ENCODE measurements at regions of chr3 and their contacts with region 1.

Region 1: GRCh38 chr3:42020681-42021307 is 58.9 kb upstream of the ULK4 start:
- DNase-seq: peak; percentile 93
- ATAC-seq: peak; percentile 87
- H3K4me3 ChIP-seq: peak overlapping the region; percentile 16; the same call in 1 of the 2 replicates
- H3K27ac ChIP-seq: peak overlapping the region; percentile 64
- H3K4me1 ChIP-seq: peaks cover 46% of the 10 kb centered on the region
- H3K27me3 ChIP-seq: no peaks in the 10 kb centered on the region
- CTCF ChIP-seq: no peak

Region 2: DNA sequence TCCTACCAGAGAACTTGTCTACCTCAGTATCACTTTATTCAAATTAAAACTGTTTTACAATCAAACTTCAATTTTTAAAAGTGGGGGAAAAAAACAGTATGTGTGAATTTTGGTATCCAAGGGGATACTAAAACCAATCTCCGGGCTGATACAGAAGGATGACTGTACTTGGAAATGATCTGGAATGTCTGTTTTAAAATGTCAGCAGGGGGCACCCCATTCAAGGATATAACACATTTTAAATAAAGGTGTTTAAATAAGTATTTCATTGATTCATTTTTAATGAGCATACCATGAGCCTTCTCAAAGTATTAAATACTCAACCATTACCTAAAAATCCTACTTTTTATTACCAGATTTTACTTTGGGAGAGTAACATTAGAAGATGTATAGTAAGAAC is 126.8 kb before region 1 on chr3:
- CTCF ChIA-PET with region 1: no interaction called
- POLR2A ChIA-PET with region 1: no interaction called
- intact Hi-C with region 1: loop called (anchors 2 kb)
- DNase-seq: peak; percentile 71
- ATAC-seq: peak; percentile 69
- H3K4me3 ChIP-seq: no peak overlapping the region
- H3K27ac ChIP-seq: no peak overlapping the region
- H3K4me1 ChIP-seq: no peaks in the 10 kb centered on the region
- H3K27me3 ChIP-seq: no peaks in the 10 kb centered on the region
- CTCF ChIP-seq: peak; percentile 77

Region 3: DNA sequence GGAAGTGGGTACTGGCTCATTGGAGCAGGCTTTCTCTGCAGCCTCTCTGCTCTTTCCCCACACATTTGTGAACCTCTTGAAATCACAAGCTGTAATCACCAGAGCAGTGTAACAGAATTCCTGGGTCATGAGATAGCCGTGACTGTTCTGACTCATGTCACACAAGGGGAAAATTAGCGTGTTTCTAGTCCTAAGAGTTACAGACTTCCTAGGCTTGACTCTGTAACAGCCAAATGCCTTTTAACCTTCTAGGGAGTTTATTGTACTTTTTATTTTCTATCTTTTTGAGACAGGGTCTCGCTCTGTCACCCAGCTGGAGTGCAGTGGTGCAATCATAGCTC is 15.7 kb after region 1 on chr3:
- CTCF ChIA-PET with region 1: no interaction called
- POLR2A ChIA-PET with region 1: no interaction called
- intact Hi-C with region 1: no loop called
- DNase-seq: peak; percentile 80
- ATAC-seq: peak; percentile 91
- H3K4me3 ChIP-seq: no peak overlapping the region
- H3K27ac ChIP-seq: peak overlapping the region; percentile 50
- H3K4me1 ChIP-seq: peaks cover 21% of the 10 kb centered on the region
- H3K27me3 ChIP-seq: no peaks in the 10 kb centered on the region
- CTCF ChIP-seq: no peak

Region 4: GRCh38 chr3:42071904-42072592 is 51.3 kb after region 1 on chr3:
- CTCF ChIA-PET with region 1: no interaction called
- POLR2A ChIA-PET with region 1: no interaction called
- intact Hi-C with region 1: loop called (anchors 1 kb)
- DNase-seq: peak; percentile 97
- ATAC-seq: peak; percentile 94
- H3K4me3 ChIP-seq: peak overlapping the region; percentile 46
- H3K27ac ChIP-seq: peak overlapping the region; percentile 74
- H3K4me1 ChIP-seq: peaks cover 29% of the 10 kb centered on the region
- H3K27me3 ChIP-seq: no peaks in the 10 kb centered on the region
- CTCF ChIP-seq: 0 out of 2 replicates have a peak, but pooled peaks have one; percentile 16

Measured in PC-3 (cell line).